MCF 10A (cell line): ENCODE measurements at regions of chr2 and their contacts with region 1.

Region 1: GRCh38 chr2:199607914-199608313 is 150.2 kb upstream of the SATB2 start:
- DNase-seq: no peak
- H3K4me3 Mint-ChIP-seq: no peak overlapping the region
- H3K27ac Mint-ChIP-seq: no peak overlapping the region
- H3K4me1 Mint-ChIP-seq: no peaks in the 10 kb centered on the region
- H3K27me3 Mint-ChIP-seq: peaks cover 51% of the 10 kb centered on the region
- CTCF ChIP-seq: no peak

Region 2: DNA sequence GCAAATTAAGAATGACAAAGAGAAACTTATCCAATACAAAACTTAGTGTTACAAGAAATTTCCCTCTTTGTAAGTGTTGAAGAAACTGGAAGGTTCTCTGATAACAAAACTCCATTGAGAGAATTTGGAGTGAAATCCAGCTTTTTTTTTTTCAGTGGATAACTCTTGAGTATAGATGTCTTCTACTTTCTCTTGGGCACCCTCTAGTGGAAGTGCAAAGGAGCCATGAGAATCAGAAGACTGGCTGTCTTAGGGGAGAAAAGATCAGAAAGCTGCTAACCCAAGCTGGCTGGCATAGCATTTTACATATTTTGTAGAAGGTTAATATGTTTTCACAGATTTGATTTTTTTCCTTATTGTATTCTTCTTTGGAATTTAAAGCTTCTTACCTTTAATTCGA is 11.4 kb before region 1 on chr2:
- CTCF ChIA-PET with region 1: interaction called, 11 read pairs
- POLR2A ChIA-PET with region 1: no interaction called
- intact Hi-C with region 1: no loop called
- DNase-seq: peak; percentile 60
- H3K4me3 Mint-ChIP-seq: no peak overlapping the region
- H3K27ac Mint-ChIP-seq: no peak overlapping the region
- H3K4me1 Mint-ChIP-seq: no peaks in the 10 kb centered on the region
- H3K27me3 Mint-ChIP-seq: peaks cover 45% of the 10 kb centered on the region
- CTCF ChIP-seq: peak; percentile 32